Gastrocnemius medialis (tissue), 4 donors: ENCODE measurements at regions of chr1 and their contacts with region 1.

Region 1: GRCh38 chr1:77759071-77760028 is at the start of gene USP33:
- DNase-seq: peak; percentile 78 to 84
- ATAC-seq: peak; percentile 88 to 93
- H3K4me3 ChIP-seq: peak within 1 kb of the TSS; percentile 84 to 100 (median 94)
- H3K27ac ChIP-seq: peak within 1 kb of the TSS; percentile 82 to 97 (median 88)
- H3K4me1 ChIP-seq: peaks cover 29 to 36% of the 10 kb centered on the region in 2 donors
- H3K27me3 ChIP-seq: no peaks in the 10 kb centered on the region
- CTCF ChIP-seq: no peak
- POLR2A ChIP-seq: peak; percentile 78 to 85
- total RNA-seq, gene USP33: 31.1 to 51.8 (median 34.6) TPM

Region 2: DNA sequence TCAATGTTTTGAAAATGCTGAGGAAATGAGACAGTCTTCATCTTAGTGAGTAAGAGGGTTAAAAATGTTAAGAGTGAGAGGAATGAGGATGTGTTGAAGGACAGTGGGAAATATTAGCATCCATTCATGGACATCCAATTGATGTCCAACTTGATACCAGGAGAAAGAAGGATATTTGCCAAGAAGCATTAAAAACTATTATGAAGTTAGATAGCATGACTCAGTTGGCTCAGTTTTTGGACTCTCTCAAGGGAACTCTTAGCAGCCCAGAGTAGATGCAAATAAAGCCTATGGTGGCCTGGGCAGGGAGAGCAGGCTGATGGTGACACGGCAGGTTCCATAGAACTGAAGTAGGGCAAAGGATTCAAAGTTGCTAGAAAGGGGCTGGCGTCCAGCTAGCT is 247.9 kb before region 1 on chr1:
- in situ Hi-C with region 1: no loop called
- intact Hi-C with region 1: no loop called
- DNase-seq: no peak
- ATAC-seq: peak in 1 of 2 donors; percentile 17
- H3K4me3 ChIP-seq: no peak overlapping the region
- H3K27ac ChIP-seq: no peak overlapping the region
- H3K4me1 ChIP-seq: no peaks in the 10 kb centered on the region
- H3K27me3 ChIP-seq: no peaks in the 10 kb centered on the region
- CTCF ChIP-seq: no peak
- POLR2A ChIP-seq: no peak

Region 3: DNA sequence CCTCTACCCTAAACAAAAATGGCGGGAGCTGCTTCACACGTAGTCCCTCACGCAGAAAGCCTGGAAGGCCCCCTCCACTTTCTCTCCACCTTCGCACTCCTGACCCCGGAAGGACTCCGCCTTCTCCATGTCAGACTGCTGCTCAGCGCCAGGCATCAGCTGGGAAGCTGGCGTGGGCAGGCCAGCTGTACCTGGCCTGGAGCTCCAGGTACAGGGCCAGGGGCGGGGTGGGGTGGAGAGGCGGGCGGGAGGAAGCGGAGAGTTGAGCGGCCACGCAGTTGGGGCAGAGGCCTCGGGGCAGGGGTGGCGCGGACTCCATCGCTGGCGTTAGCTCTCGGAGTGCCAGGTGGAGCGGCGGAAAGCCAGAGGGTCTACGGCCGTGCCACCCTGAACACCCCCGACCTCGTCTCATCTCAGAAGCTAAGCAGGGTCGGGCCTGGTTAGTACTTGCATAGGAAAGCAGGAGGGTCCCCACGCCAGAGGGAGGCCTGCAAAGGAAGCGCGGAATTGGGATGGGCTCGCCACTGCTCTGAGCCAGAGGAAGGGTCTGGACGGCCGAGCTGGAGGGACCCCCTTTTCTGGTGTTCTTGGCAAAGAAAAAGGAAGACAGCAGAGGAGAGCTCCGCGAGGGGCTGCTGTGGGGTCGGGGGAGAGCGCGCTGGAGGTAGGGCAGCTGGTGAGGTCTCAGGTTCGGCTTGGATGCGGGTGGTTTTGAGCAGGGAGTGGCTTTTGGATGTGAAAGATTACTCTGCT is 20.4 kb after region 1 on chr1 and contains the start of gene MIGA1:
- in situ Hi-C with region 1: no loop called
- intact Hi-C with region 1: loop called (anchors 1 kb)
- DNase-seq: peak; percentile 87 to 88
- ATAC-seq: peak; percentile 99
- H3K4me3 ChIP-seq: peak within 1 kb of the TSS; percentile 82 to 98 (median 85)
- H3K27ac ChIP-seq: peak within 1 kb of the TSS; percentile 71 to 85 (median 82)
- H3K4me1 ChIP-seq: peaks cover 16% of the 10 kb centered on the region in 2 donors
- H3K27me3 ChIP-seq: no peaks in the 10 kb centered on the region
- CTCF ChIP-seq: no peak
- POLR2A ChIP-seq: peak; percentile 20 to 42
- total RNA-seq, gene MIGA1: 15.0 to 21.7 (median 19.2) TPM